Naive thymus-derived CD4-positive, alpha-beta T cell (primary cell): ENCODE measurements at regions of chr9 and their contacts with region 1.

Region 1: DNA sequence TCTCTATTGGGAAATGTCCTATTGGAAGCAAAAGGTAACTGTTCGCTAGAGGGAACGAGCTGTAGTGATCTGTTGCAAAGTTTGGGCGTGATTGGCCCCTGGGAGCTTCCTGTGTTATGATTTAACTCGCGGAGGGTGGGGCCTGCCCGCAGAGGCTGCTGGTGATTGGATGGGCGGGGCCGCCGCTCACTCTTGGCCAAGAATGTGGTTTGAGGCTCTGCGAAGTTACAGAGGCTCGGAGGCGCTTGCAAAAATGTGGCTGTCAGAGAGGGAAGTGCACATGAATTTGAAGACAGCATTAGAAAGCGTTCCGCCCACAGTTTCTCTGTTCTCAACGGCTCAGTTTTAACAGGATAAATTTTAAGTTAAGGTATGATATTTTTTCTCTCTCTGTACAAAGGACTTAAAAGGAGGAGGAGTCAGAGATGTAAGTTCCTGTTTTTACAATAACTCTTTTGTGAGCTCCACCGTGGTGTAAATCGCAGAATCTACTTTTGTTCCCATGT is 46.9 kb downstream of the CNTRL start:
- DNase-seq: peak; percentile 83 to 98 (median 97)
- ATAC-seq: peak; percentile 100
- H3K4me3 ChIP-seq: peak overlapping the region; percentile 87
- H3K4me3 Mint-ChIP-seq: peak overlapping the region; percentile 87 to 96 (median 89)
- H3K27ac ChIP-seq: peak overlapping the region; percentile 88
- H3K27ac Mint-ChIP-seq: peak overlapping the region; percentile 87 to 99 (median 93)
- H3K4me1 ChIP-seq: peaks cover 20 to 26% of the 10 kb centered on the region in 2 donors
- H3K4me1 Mint-ChIP-seq: peaks cover 27 to 63% (median 54%) of the 10 kb centered on the region in 7 donors
- H3K27me3 ChIP-seq: no peaks in the 10 kb centered on the region
- H3K27me3 Mint-ChIP-seq: no peaks in the 10 kb centered on the region

Region 2: GRCh38 chr9:120579750-120580590 is 541.7 kb before region 1 on chr9 and contains the start of gene CDK5RAP2:
- CTCF ChIA-PET with region 1: no interaction called
- POLR2A ChIA-PET with region 1: no interaction called
- intact Hi-C with region 1: loop called in 1 of 2 experiments (anchors 1 kb)
- DNase-seq: peak; percentile 77 to 94 (median 92)
- ATAC-seq: peak; percentile 99
- H3K4me3 ChIP-seq: peak within 1 kb of the TSS; percentile 85
- H3K4me3 Mint-ChIP-seq: peak within 1 kb of the TSS; percentile 86 to 98 (median 94)
- H3K27ac ChIP-seq: peak within 1 kb of the TSS; percentile 81
- H3K27ac Mint-ChIP-seq: peak within 1 kb of the TSS; percentile 88 to 95 (median 91)
- H3K4me1 ChIP-seq: peaks cover 15 to 17% of the 10 kb centered on the region in 2 donors
- H3K4me1 Mint-ChIP-seq: peaks cover 29 to 68% (median 62%) of the 10 kb centered on the region in 7 donors
- H3K27me3 ChIP-seq: no peaks in the 10 kb centered on the region
- H3K27me3 Mint-ChIP-seq: peaks cover 0 to 3% (median 0%) of the 10 kb centered on the region in 5 donors
- total RNA-seq, gene CDK5RAP2: 62.2 to 98.1 (median 78.1) TPM

Region 3: DNA sequence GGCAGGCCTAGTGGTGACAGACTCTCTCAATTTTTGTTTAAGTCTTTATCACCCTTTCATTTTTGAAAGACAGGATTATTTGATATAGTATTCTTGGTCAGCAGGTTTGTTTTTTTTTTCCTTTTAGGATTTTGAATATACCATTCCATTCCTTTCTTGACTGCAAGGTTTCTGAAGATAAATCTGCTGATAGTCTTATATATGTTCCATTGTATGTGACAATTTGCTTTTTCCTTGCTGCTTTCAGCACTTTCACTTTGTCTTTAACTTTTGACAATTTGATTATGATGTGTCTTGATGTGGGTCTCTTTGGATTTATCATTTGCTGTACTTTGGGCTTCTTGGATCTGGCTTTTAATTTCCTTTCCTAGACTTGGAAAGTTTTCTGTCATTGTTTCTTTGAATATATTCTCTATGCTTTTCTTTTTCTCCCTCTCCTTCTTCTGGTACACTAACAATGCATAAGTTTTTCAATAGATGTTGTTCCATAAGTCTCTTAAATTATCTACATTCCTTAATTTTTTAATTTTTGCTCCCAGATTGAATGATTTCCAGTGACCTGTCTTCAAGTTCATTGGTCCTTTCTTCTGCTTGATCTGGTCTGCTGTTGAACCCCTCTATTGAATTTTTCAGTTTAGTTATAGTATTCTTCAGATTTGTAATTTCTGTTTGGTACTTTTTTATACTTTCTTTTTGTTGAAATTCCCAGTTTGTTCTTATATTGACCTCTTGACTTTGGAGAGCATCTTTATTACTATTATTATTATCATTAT is 313.8 kb before region 1 on chr9:
- CTCF ChIA-PET with region 1: no interaction called
- POLR2A ChIA-PET with region 1: no interaction called
- intact Hi-C with region 1: no loop called
- DNase-seq: no peak
- ATAC-seq: no peak
- H3K4me3 ChIP-seq: no peak overlapping the region
- H3K4me3 Mint-ChIP-seq: no peak overlapping the region
- H3K27ac ChIP-seq: no peak overlapping the region
- H3K27ac Mint-ChIP-seq: no peak overlapping the region
- H3K4me1 ChIP-seq: no peaks in the 10 kb centered on the region
- H3K4me1 Mint-ChIP-seq: peaks cover 0 to 2% (median 0%) of the 10 kb centered on the region in 7 donors
- H3K27me3 ChIP-seq: no peaks in the 10 kb centered on the region
- H3K27me3 Mint-ChIP-seq: no peaks in the 10 kb centered on the region

Region 4: DNA sequence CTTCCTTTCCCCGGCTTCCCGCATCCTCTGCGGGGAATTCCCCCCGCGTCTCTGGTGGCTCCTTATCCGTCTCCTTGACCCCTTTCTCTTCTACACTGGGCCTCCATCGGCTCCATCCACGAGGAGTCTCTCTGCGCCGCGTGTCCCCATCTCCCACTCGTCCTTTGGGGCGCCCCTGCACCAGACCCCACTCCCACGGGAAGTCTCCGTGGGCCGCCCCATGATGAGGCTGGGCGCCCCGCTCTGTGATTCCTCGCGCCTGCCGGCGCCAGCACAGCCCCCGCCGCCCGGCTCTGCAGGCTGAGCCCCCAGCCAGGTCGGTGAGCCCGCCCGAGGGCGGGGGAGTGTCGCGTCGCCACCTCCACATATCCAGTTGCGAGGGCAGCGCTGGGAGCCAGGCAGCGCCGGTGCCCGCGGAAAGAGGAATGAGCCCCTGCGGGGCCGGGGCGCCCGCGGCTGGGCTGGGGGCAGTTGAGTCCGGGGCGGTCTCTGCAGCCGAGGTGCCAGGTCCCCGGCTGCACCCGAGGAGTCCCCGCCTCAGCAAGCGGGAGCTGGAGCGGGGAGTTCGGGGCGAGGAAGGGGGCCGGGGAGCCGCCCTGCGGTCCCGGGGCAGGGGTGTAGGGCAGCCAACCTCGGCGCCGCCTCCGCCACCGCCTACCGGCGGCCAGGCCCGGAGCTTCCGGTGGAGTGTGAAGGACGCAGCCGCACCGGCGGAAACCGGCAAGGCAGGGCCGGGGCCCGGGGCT is 193.0 kb before region 1 on chr9:
- CTCF ChIA-PET with region 1: no interaction called
- POLR2A ChIA-PET with region 1: no interaction called
- intact Hi-C with region 1: loop called in 1 of 2 experiments (anchors 1 kb)
- DNase-seq: peak; percentile 63 to 86 (median 74)
- ATAC-seq: peak; percentile 58
- H3K4me3 ChIP-seq: peak overlapping the region; percentile 79
- H3K4me3 Mint-ChIP-seq: peak overlapping the region; percentile 90 to 100 (median 96)
- H3K27ac ChIP-seq: peak overlapping the region; percentile 97
- H3K27ac Mint-ChIP-seq: peak overlapping the region; percentile 95 to 100 (median 99)
- H3K4me1 ChIP-seq: peaks cover 62 to 84% of the 10 kb centered on the region in 2 donors
- H3K4me1 Mint-ChIP-seq: peaks cover 57 to 95% (median 86%) of the 10 kb centered on the region in 7 donors
- H3K27me3 ChIP-seq: no peaks in the 10 kb centered on the region
- H3K27me3 Mint-ChIP-seq: no peaks in the 10 kb centered on the region

Region 5: DNA sequence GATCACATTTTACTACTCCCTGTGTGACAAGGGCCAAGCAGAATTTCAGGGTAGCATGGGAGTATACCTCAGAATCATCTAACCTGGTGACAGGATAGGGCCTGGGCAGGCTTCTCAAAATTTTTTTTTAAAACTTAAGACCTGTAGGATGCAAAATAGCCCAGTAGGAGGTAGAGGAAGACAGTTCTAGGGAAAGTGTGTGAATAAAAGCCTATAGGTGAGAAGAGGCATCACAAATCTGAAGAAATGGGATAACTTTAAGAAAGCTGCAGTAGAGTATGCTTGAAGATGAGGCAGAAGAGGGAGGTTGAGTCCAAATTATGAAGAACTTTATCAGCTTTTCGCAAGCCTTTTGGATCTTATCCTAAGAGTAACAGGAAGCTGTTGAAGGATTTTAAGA is 14.6 kb before region 1 on chr9:
- CTCF ChIA-PET with region 1: interaction called, 14 read pairs
- POLR2A ChIA-PET with region 1: interaction called, 35 read pairs
- intact Hi-C with region 1: loop called in 1 of 2 experiments (anchors 1 kb)
- DNase-seq: peak in 7 of 9 donors; percentile 21 to 68 (median 55)
- ATAC-seq: peak; percentile 94
- H3K4me3 ChIP-seq: no peak overlapping the region
- H3K4me3 Mint-ChIP-seq: no peak overlapping the region
- H3K27ac ChIP-seq: no peak overlapping the region
- H3K27ac Mint-ChIP-seq: peak overlapping the region in 8 of 9 donors; percentile 36 to 88 (median 61)
- H3K4me1 ChIP-seq: no peaks in the 10 kb centered on the region
- H3K4me1 Mint-ChIP-seq: peaks cover 15 to 29% (median 27%) of the 10 kb centered on the region in 7 donors
- H3K27me3 ChIP-seq: no peaks in the 10 kb centered on the region
- H3K27me3 Mint-ChIP-seq: no peaks in the 10 kb centered on the region

Region 6: GRCh38 chr9:121156263-121156731 is 34.7 kb after region 1 on chr9:
- CTCF ChIA-PET with region 1: no interaction called
- POLR2A ChIA-PET with region 1: interaction called, 4 read pairs
- intact Hi-C with region 1: loop called (anchors 1 to 5 kb)
- DNase-seq: no peak
- ATAC-seq: peak; percentile 59
- H3K4me3 ChIP-seq: no peak overlapping the region
- H3K4me3 Mint-ChIP-seq: peak overlapping the region in 2 of 10 donors; percentile 14 to 46
- H3K27ac ChIP-seq: no peak overlapping the region
- H3K27ac Mint-ChIP-seq: peak overlapping the region in 8 of 9 donors; percentile 29 to 90 (median 72)
- H3K4me1 ChIP-seq: peaks cover 5 to 8% of the 10 kb centered on the region in 2 donors
- H3K4me1 Mint-ChIP-seq: peaks cover 14 to 56% (median 45%) of the 10 kb centered on the region in 7 donors
- H3K27me3 ChIP-seq: no peaks in the 10 kb centered on the region
- H3K27me3 Mint-ChIP-seq: no peaks in the 10 kb centered on the region